ENCODE measurements at regions of chr3 and their contacts with region 1.

Region 1: GRCh38 chr3:40317061-40317855 is 7.8 kb downstream of the EIF1B start:
- DNase-seq: peak; percentile 65
- H3K4me3 ChIP-seq: no peak overlapping the region; a peak in 1 of 4 replicates
- H3K27ac ChIP-seq: no peak overlapping the region
- H3K4me1 ChIP-seq: peaks cover 0 to 10% of the 10 kb centered on the region in 2 experiments; a peak in 2 of 4 replicates
- H3K27me3 ChIP-seq: no peaks in the 10 kb centered on the region
- CTCF ChIP-seq: peak; percentile 90
- EP300 ChIP-seq: no peak
- RAD21 ChIP-seq: peak; percentile 93

Region 2: GRCh38 chr3:39724233-39724846 is 592.9 kb before region 1 on chr3:
- CTCF ChIA-PET with region 1: interaction called, 11 read pairs
- POLR2A ChIA-PET with region 1: no interaction called
- DNase-seq: peak; percentile 17
- H3K4me3 ChIP-seq: no peak overlapping the region
- H3K27ac ChIP-seq: no peak overlapping the region
- H3K4me1 ChIP-seq: peaks cover 0 to 8% of the 10 kb centered on the region in 2 experiments; a peak in 2 of 4 replicates
- H3K27me3 ChIP-seq: no peaks in the 10 kb centered on the region
- CTCF ChIP-seq: peak; percentile 50
- EP300 ChIP-seq: no peak
- RAD21 ChIP-seq: peak; percentile 67

Region 3: GRCh38 chr3:39900571-39900970 is 416.7 kb before region 1 on chr3:
- CTCF ChIA-PET with region 1: no interaction called
- POLR2A ChIA-PET with region 1: no interaction called
- DNase-seq: no peak
- H3K4me3 ChIP-seq: no peak overlapping the region
- H3K27ac ChIP-seq: no peak overlapping the region
- H3K4me1 ChIP-seq: no peaks in the 10 kb centered on the region; a peak in 1 of 4 replicates
- H3K27me3 ChIP-seq: no peaks in the 10 kb centered on the region
- CTCF ChIP-seq: no peak
- EP300 ChIP-seq: no peak
- RAD21 ChIP-seq: no peak

Region 4: GRCh38 chr3:40191850-40192448 is 125.3 kb before region 1 on chr3:
- CTCF ChIA-PET with region 1: interaction called, 289 read pairs
- POLR2A ChIA-PET with region 1: interaction called, 3 read pairs
- DNase-seq: peak; percentile 71
- H3K4me3 ChIP-seq: no peak overlapping the region; a peak in 1 of 4 replicates
- H3K27ac ChIP-seq: no peak overlapping the region
- H3K4me1 ChIP-seq: peaks cover 0 to 11% of the 10 kb centered on the region in 2 experiments; a peak in 1 of 4 replicates
- H3K27me3 ChIP-seq: no peaks in the 10 kb centered on the region
- CTCF ChIP-seq: peak; percentile 92
- EP300 ChIP-seq: no peak
- RAD21 ChIP-seq: peak; percentile 89

Measured in SK-N-SH (cell line).